MCF 10A (cell line): ENCODE measurements at regions of chr18 and their contacts with region 1.

Region 1: GRCh38 chr18:77086034-77086433 is 46.5 kb downstream of the MBP start:
- DNase-seq: peak; percentile 92
- H3K4me3 Mint-ChIP-seq: peak overlapping the region; percentile 28
- H3K27ac Mint-ChIP-seq: no peak overlapping the region
- H3K4me1 Mint-ChIP-seq: peaks cover 59% of the 10 kb centered on the region
- H3K27me3 Mint-ChIP-seq: no peaks in the 10 kb centered on the region
- CTCF ChIP-seq: no peak

Region 2: GRCh38 chr18:77067291-77068061 is 18.6 kb before region 1 on chr18:
- CTCF ChIA-PET with region 1: interaction called, 4 read pairs
- POLR2A ChIA-PET with region 1: interaction called, 28 read pairs
- intact Hi-C with region 1: no loop called
- DNase-seq: peak; percentile 88
- H3K4me3 Mint-ChIP-seq: peak overlapping the region; percentile 40
- H3K27ac Mint-ChIP-seq: peak overlapping the region; percentile 88
- H3K4me1 Mint-ChIP-seq: peaks cover 50% of the 10 kb centered on the region
- H3K27me3 Mint-ChIP-seq: no peaks in the 10 kb centered on the region
- CTCF ChIP-seq: peak; percentile 17

Region 3: DNA sequence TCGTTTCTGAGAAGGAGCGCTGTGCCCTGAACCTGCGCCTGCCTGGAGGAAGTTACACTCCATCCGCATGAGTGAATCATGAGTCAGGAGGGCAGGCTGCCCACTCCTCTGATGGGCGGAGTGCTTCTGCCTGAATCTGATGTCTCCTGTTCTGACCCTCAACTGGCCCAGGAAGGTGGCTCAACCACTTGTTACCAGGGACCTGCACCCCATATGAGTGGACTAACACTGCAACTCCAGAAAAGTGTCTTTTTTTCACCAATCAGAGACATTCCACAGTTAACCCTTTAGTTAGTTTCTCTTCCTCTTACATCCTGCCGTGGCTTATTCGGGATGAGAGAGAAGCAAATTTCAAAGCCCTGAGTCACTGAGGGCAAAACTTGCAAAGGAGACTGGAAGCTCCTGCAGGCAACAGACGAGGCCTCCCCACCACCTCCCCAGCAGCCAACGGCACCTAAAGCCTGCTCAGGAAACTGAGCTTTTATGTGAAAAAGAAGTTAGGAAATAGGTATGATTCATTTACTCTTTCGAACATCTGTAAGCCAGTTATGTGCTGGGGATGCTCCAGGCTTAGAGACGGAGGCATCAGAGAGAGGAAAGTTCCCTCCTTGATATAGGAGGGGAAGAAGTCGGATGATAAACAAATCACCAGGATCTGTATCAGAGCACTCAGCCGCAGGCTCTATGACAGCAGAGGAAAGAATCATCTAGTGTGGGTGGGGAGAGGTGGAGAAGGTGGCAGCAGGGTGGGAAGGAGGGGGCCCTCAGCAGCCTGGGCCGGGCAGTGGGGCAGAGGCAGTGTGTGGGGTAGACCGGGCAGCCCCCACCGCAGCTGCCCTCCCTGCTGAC is 15.6 kb after region 1 on chr18:
- CTCF ChIA-PET with region 1: interaction called, 4 read pairs
- POLR2A ChIA-PET with region 1: interaction called, 36 read pairs
- intact Hi-C with region 1: no loop called
- DNase-seq: peak; percentile 95
- H3K4me3 Mint-ChIP-seq: peak overlapping the region; percentile 60
- H3K27ac Mint-ChIP-seq: peak overlapping the region; percentile 89
- H3K4me1 Mint-ChIP-seq: peaks cover 20% of the 10 kb centered on the region
- H3K27me3 Mint-ChIP-seq: no peaks in the 10 kb centered on the region
- CTCF ChIP-seq: no peak

Region 4: DNA sequence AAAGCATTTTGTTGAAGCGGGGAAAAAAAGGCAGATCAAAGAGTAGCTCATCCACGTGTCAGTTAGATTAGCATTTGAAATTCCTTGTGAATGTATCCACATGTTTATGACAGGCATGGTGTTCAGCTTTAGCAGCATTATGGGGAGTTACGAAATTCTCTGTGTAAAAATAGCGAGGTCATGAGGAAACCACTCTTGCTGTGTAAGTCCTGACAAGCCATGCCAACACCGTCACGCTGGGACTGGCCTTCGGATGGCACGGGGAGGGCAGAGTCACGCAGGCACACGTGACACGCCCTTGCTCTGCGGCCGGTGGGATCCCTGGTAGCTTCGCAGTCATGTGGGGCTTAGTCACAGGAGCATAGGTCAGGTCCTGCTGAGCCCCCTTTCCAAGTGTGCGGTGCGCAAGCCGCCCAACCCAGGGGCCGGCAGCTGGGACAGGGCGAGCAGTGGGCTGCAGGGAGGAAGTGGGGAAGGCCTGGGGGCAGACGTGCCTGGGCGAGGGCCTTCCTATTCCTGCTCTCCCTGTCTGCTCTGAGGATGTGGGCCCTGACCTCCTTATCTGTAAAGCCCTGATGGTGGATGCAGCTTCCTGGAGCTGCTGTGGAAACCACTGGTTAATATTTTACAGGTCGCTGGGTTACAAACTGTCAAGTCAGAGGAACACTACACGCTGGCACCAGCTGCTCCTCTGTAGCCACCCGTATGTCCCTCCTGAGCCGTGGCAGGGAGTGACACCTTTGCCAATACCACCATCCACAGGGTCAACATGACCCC is 28.6 kb after region 1 on chr18:
- CTCF ChIA-PET with region 1: interaction called, 4 read pairs
- POLR2A ChIA-PET with region 1: interaction called, 11 read pairs
- intact Hi-C with region 1: no loop called
- DNase-seq: peak; percentile 98
- H3K4me3 Mint-ChIP-seq: peak overlapping the region; percentile 57
- H3K27ac Mint-ChIP-seq: peak overlapping the region; percentile 85
- H3K4me1 Mint-ChIP-seq: peaks cover 44% of the 10 kb centered on the region
- H3K27me3 Mint-ChIP-seq: no peaks in the 10 kb centered on the region
- CTCF ChIP-seq: no peak

Region 5: GRCh38 chr18:77132371-77133050 is 46.5 kb after region 1 on chr18 and contains the start of gene MBP:
- CTCF ChIA-PET with region 1: no interaction called
- POLR2A ChIA-PET with region 1: interaction called, 14 read pairs
- intact Hi-C with region 1: no loop called
- DNase-seq: peak; percentile 73
- H3K4me3 Mint-ChIP-seq: peak within 1 kb of the TSS; percentile 82
- H3K27ac Mint-ChIP-seq: no peak within 1 kb of the TSS
- H3K4me1 Mint-ChIP-seq: peaks cover 16% of the 10 kb centered on the region
- H3K27me3 Mint-ChIP-seq: no peaks in the 10 kb centered on the region
- CTCF ChIP-seq: no peak
- total RNA-seq, gene MBP: 31.6 and 31.7 TPM in 2 replicates

Region 6: DNA sequence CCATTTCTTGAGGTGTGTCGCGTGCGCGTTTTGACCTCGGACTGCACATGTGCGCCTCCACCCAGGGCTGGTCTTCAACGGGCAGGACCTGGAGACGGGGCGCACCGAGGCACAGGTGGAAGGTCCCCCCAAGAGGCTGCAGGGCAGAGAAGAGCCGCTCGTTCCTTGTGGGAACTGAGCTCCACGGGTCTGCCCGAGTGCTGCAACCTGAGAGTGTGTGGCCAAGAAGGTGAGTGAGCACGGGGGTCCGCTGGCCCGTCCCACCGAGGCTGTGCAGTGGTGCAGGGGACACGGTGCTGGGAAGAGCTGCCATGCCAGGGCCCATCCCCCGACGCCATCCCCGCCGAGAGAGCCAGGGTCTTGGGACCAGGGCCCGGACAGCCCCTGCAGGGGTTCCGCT is 431.9 kb after region 1 on chr18:
- CTCF ChIA-PET with region 1: no interaction called
- POLR2A ChIA-PET with region 1: no interaction called
- intact Hi-C with region 1: no loop called
- DNase-seq: no peak
- H3K4me3 Mint-ChIP-seq: no peak overlapping the region
- H3K27ac Mint-ChIP-seq: no peak overlapping the region
- H3K4me1 Mint-ChIP-seq: peaks cover 5% of the 10 kb centered on the region
- H3K27me3 Mint-ChIP-seq: no peaks in the 10 kb centered on the region
- CTCF ChIP-seq: no peak